Prostate gland (tissue), 2 donors: ENCODE measurements at regions of chr5 and their contacts with region 1.

Region 1: GRCh38 chr5:59666440-59667068 is 227.0 kb downstream of the PDE4D start:
- DNase-seq: no peak
- H3K4me3 ChIP-seq: no peak overlapping the region
- H3K27ac ChIP-seq: no peak overlapping the region
- H3K4me1 ChIP-seq: no peaks in the 10 kb centered on the region
- H3K27me3 ChIP-seq: no peaks in the 10 kb centered on the region
- CTCF ChIP-seq: peak in 1 of 4 experiments; percentile 4
- POLR2A ChIP-seq: no peak

Region 2: DNA sequence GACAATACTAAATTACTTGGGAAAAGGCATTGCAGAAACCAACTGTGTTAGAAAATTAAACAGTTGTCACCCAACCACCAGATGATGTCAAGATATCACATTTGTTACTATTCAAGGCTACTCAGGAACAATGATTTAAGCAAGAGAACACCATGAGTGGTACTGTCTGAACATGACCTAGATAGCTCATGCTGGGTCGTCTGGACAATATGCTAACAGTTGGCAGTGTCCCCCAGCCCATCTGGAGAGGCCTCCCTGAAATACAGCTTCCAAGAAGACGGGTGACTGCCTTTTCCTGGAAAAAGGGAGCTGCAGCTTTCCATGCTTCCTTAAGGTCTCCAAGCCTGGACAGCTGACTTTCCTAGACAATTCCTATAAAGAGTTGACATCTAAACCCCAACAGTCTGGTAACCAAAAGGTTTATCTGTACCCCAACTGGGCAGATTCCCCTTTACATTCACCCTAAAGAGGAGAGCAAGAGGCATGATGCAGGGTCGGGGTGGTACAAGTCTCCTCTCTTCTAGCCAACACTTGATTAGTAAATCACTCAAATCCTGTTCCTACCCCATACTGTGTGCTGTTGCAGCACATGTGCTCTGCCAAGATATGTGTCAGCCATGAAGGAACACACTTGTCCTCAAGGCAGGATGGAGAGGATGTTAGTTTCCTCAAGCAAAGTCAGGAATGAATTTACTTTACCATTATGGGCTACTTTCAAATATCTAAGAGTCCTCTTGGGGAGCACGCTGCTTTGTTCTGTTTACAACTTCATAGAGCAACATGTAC is 206.0 kb before region 1 on chr5:
- intact Hi-C with region 1: no loop called
- DNase-seq: no peak
- H3K4me3 ChIP-seq: no peak overlapping the region
- H3K27ac ChIP-seq: no peak overlapping the region
- H3K4me1 ChIP-seq: no peaks in the 10 kb centered on the region
- H3K27me3 ChIP-seq: no peaks in the 10 kb centered on the region
- CTCF ChIP-seq: no peak
- POLR2A ChIP-seq: no peak

Region 3: GRCh38 chr5:59506285-59506877 is 160.2 kb before region 1 on chr5:
- intact Hi-C with region 1: loop called (anchors 5 kb)
- DNase-seq: no peak
- H3K4me3 ChIP-seq: no peak overlapping the region
- H3K27ac ChIP-seq: no peak overlapping the region
- H3K4me1 ChIP-seq: no peaks in the 10 kb centered on the region
- H3K27me3 ChIP-seq: no peaks in the 10 kb centered on the region
- CTCF ChIP-seq: peak; percentile 29 to 59 (median 50)
- POLR2A ChIP-seq: no peak

Region 4: GRCh38 chr5:59562756-59563389 is 103.7 kb before region 1 on chr5:
- intact Hi-C with region 1: no loop called
- DNase-seq: no peak
- H3K4me3 ChIP-seq: no peak overlapping the region
- H3K27ac ChIP-seq: no peak overlapping the region
- H3K4me1 ChIP-seq: no peaks in the 10 kb centered on the region
- H3K27me3 ChIP-seq: no peaks in the 10 kb centered on the region
- CTCF ChIP-seq: no peak
- POLR2A ChIP-seq: no peak